ENCODE measurements at regions of chr6 and their contacts with region 1.

Region 1: DNA sequence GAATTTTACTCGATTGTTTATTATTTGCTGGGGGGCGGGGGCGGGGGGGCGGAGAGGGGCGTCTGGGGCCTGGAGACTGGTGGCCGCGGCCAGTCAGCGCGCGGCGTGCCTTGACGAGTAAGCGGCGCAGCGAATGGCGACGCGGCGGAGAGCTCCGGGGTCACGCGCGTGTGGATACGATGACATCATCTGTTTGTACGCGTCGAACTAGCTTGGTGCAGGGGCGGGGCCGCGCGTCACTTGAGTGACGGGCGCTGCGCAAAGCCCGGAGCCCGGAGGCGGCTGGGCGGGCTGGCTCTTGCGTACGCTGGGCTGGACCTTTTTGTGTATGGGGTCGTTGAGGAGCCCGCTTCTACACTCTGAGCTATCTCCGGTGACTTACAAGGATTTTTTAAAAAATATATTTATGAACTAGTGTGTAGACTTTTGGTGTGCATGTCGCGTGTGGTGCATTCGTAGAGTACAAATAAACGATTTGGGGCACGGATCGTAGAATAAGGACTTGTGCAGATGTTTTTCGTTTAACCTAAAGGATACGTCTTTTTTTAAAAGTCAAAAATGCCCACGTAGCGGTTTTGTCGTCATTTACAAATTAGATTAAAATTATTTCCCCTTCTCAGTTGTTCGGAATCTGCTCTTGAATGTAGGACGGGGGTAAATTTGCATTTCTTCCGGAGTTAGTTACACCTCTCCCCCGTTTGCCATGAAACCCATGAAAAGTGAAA is 2.2 kb upstream of the FOXO3 start:
- DNase-seq: peak; percentile 99
- ATAC-seq: peak; percentile 71

Region 2: DNA sequence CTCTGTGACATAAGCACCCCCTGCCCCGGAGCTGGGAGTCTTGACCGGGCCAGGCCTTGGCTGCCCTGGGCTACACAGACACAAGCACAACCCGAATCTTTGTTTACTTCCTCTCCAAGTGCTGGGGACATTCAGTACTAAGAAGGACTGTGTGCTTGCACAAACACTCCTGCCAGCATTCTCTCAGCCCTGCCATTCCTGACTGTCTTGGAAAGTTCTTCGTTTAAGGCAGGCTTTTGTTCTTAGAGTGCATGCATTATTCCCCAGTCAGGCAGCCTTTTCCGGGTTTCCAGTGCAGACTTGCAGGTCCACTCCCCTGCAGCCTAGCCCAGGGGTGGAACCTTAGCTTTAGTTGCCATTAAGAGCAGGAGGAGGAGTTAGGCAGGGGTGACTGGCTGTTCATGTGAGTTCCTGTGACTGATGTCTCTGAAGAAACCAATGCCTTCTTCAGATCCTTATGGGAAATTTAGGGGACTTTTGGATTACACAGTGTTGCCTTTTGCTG is 30.8 kb after region 1 on chr6:
- intact Hi-C with region 1: loop called (anchors 2 kb)
- DNase-seq: peak; percentile 90
- ATAC-seq: peak; percentile 93

Region 3: GRCh38 chr6:108782179-108783041 is 223.9 kb after region 1 on chr6:
- intact Hi-C with region 1: loop called (anchors 1 kb)
- DNase-seq: peak; percentile 92
- ATAC-seq: peak; percentile 91

Region 4: DNA sequence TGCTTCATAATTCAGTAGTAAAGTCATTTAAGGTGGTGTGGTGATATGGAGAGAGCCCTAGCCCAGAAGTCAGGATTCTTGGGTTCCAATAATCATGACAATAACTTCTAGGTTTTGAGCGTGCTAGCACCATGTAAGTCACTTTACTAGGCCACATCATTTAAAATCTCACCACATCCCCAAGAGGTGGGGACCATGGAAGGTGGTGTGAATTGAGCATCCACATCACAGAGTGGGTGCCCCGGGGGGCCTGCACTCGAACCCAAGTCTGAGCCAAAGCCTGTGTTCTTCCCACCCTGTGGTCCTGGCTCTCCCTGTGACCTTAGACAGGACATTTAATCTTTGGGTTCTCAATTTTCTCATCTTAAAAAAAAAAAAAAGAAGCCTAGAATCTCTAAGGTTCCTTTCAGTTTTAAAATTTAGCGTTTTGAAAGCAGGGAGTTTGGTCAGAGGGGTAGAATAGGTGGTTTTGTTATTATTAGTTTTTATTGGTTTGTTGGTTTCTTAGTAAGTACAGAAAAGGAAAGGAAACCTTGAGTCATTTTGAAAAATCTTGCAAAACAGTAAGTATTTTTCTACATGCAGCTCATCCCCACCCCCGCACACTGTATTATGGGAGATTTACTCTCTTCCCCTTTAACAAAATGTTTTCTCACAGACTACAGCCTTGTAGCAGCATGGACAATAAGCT is 316.1 kb after region 1 on chr6:
- intact Hi-C with region 1: loop called (anchors 5 kb)
- DNase-seq: no peak
- ATAC-seq: peak; percentile 6

Region 5: GRCh38 chr6:108947114-108947854 is 388.8 kb after region 1 on chr6:
- intact Hi-C with region 1: loop called (anchors 2 kb)
- DNase-seq: no peak
- ATAC-seq: peak; percentile 41